ENCODE measurements at regions of chr1 and their contacts with region 1.

Region 1: DNA sequence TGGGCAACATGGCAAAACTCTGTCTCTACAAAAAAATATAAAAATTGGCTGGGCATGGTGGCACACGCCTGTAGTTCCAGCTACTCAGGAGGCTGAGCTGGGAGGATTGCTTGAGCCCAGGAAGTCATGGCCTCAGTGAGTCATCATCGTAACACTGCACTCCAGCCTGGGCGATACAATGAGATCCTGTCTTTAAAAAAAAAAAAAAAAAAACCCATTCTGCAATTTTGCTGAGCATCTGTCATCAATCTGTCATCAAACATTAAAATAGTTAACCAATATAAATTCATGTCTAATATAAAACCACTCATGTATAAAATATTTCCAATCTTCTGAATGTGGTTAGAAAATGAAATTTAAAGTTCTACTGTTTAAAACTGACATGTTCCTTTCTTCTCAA is 56.9 kb downstream of the LPAR3 start:
- DNase-seq: no peak
- ATAC-seq: peak; percentile 58; the same call in 1 of the 2 replicates
- H3K4me3 ChIP-seq: no peak overlapping the region
- H3K27ac ChIP-seq: no peak overlapping the region
- H3K4me1 ChIP-seq: peaks cover 32% of the 10 kb centered on the region
- H3K27me3 ChIP-seq: peaks cover 6% of the 10 kb centered on the region; the same call in 1 of the 2 replicates
- CTCF ChIP-seq: no peak

Region 2: DNA sequence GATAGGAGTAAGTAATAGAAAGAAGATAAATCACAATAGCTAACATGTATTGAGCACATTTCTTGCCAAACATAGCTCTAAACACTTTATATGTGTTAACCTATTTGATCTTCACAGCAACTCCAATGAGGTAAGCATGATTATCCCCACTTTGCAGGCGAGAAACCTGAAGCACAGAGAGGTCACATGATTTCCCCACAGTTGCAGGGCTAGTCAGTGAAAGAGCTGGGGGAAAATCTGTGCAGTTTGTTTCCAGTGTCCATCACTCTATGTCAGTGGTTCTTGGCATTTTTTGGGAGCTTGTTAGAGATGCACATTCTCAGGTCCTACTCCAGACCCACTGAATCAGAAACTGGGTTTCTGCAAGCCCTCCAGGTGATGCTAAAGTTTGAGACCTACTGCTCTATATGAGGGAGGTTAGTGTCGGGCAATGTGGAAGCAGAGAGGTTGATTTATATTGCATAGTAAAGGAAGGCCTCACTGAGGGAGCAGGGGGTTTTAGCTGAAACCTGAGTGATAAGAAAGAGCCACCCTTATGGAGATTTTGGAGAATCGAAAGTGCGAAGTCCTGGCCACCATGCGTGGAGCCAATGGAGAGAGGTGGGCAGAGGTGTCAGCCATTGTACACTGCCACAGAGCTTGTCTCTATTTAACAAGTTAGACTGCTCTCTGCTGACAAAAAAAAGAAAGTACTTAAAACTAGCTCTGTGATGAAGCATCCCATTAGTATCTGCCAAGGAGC is 191.3 kb after region 1 on chr1:
- CTCF ChIA-PET with region 1: interaction called, 12 read pairs
- POLR2A ChIA-PET with region 1: no interaction called
- in situ Hi-C with region 1: no loop called
- intact Hi-C with region 1: no loop called
- DNase-seq: peak; percentile 24
- ATAC-seq: peak; percentile 93
- H3K4me3 ChIP-seq: no peak overlapping the region
- H3K27ac ChIP-seq: no peak overlapping the region
- H3K4me1 ChIP-seq: no peaks in the 10 kb centered on the region
- H3K27me3 ChIP-seq: no peaks in the 10 kb centered on the region
- CTCF ChIP-seq: peak; percentile 60

Region 3: GRCh38 chr1:86239490-86239889 is 1403.3 kb after region 1 on chr1:
- CTCF ChIA-PET with region 1: no interaction called
- POLR2A ChIA-PET with region 1: interaction called, 11 read pairs
- in situ Hi-C with region 1: no loop called
- intact Hi-C with region 1: no loop called
- DNase-seq: no peak
- ATAC-seq: no peak
- H3K4me3 ChIP-seq: no peak overlapping the region
- H3K27ac ChIP-seq: no peak overlapping the region
- H3K4me1 ChIP-seq: no peaks in the 10 kb centered on the region
- H3K27me3 ChIP-seq: peaks cover 2% of the 10 kb centered on the region; the same call in 1 of the 2 replicates
- CTCF ChIP-seq: no peak

Measured in Panc1 (cell line).